Activated CD4-positive, alpha-beta T cell treated with anti-CD3 and anti-CD28 coated beads, Interleukin-2, amount 10 ng/mL, durations not matched to agents 24 days and 14 days (primary cell): ENCODE measurements at regions of chr6 and their contacts with region 1.

Region 1: DNA sequence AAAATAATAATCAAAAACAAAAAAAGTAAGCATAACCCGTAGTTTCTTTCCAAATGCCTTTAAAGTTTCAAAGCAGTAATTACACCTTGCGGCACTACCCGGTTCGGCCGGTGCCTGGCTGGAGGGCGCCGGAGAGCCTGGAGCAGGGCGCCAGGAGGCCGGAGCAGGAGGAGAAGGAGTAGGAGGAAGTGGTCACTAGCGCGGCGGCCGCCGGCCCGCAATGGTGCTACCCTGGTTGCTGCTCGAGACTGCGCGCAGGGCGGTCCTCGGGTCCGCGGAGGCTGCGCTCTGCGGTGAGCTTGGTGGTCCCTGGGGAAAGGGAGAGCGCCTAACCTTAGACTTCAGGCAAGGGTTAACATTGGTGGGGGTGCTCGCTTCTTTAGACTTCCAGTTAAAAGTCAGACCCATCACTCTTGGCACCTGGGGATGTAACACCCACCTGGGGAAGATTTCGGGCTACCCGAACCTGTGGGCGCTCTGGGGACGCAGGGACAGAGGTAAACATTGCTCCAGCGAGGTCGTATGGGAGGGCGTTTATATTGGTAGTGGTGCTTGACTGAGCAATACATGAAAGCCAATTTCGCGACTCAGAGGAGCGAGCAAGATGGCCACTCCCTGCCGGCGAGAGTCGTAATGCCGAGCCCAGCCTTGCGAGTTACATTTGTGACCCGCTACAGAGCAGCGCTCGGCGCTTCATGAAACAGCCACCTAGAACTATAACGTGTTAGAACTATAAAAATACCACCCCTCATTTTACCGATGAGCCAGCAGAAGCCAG is 5.8 kb upstream of the USP45 start:
- DNase-seq: peak; percentile 93
- H3K4me3 Mint-ChIP-seq: peak overlapping the region; percentile 99
- H3K27ac Mint-ChIP-seq: peak overlapping the region; percentile 99
- H3K4me1 Mint-ChIP-seq: peaks cover 18% of the 10 kb centered on the region
- H3K27me3 Mint-ChIP-seq: peaks cover 11% of the 10 kb centered on the region

Region 2: DNA sequence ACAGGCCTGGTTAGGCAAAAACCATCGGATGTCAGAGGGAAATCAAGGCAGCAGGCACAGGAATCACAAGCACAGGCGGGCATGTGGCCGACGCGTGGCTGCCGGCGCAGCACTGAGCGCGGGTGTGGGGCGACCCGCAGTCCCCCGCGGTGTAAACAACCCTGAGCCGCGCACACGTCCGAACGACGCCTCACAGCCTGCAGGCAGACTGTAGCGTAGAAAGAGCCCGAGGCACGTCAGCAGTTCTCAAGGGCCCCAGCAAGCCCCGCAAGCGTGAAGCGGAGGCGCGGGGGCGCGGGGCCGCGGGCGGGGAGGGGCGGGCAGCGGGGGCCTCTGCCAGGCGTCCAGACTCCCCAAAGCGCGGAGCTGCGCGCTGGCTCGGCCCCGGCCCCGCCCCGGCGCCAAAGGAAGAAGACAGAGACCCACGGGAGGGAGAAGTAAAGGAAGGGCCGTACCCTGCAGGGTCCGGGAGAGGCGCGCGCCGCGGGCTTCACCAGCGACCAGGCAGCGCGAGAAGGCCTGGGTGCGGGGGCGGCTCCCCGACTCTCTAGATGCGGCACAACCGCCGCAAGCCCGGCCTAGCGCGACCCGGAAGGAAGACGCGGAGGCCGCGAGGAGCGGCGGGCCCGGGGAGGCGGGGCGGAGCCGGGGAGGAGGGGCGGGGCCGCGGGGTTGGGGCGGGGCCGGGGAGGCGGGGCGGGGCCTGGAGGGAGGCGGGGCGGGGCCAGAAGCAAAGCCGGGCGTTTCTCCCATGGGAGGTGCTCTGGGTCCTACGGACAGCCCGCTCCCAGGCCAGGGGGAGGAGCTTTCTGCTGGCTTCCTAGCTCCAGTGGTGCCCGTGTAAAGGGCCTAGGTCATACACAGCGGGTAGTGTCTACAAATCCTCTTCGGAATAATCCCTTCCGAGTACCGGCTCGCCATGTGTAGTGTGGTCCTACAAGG is 573.4 kb before region 1 on chr6 and contains the start of gene FBXL4:
- intact Hi-C with region 1: loop called (anchors 5 kb)
- DNase-seq: peak; percentile 94
- H3K4me3 Mint-ChIP-seq: peak within 1 kb of the TSS; percentile 97
- H3K27ac Mint-ChIP-seq: peak within 1 kb of the TSS; percentile 98
- H3K4me1 Mint-ChIP-seq: peaks cover 32% of the 10 kb centered on the region
- H3K27me3 Mint-ChIP-seq: peaks cover 27% of the 10 kb centered on the region
- total RNA-seq, gene FBXL4: 12.8 and 15.3 TPM in 2 replicates

Region 3: GRCh38 chr6:99330159-99330558 is 190.9 kb before region 1 on chr6:
- intact Hi-C with region 1: no loop called
- DNase-seq: peak; percentile 87
- H3K4me3 Mint-ChIP-seq: no peak overlapping the region
- H3K27ac Mint-ChIP-seq: no peak overlapping the region
- H3K4me1 Mint-ChIP-seq: peaks cover 2% of the 10 kb centered on the region
- H3K27me3 Mint-ChIP-seq: peaks cover 10% of the 10 kb centered on the region

Region 4: DNA sequence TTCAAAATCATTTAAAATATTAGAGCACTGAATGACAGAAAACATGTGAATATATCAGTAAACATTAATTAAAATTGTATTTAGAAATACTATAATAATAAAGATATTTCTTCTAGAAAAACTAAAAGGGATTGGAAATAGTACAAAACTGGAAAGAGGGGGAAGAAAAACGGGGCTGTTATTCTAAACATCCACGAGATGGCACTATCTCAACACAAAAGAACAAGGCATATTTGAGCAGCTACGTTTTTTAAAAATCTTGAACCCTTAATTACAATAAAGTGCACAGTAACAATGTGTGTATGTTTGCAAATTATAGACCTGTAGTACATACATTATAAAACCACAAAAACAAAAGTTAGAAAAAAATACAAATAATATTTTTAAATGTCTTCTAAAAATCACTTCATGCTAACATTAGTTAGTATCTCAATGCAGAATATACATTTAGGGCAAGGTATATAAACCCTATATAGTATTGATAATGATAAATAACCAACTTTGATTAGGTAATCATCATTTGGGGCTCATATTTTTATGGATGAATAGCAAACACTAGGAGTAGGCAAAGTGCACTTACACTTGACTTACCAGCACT is 53.4 kb before region 1 on chr6:
- intact Hi-C with region 1: loop called (anchors 5 kb)
- DNase-seq: no peak
- H3K4me3 Mint-ChIP-seq: no peak overlapping the region
- H3K27ac Mint-ChIP-seq: no peak overlapping the region
- H3K4me1 Mint-ChIP-seq: no peaks in the 10 kb centered on the region
- H3K27me3 Mint-ChIP-seq: no peaks in the 10 kb centered on the region

Region 5: DNA sequence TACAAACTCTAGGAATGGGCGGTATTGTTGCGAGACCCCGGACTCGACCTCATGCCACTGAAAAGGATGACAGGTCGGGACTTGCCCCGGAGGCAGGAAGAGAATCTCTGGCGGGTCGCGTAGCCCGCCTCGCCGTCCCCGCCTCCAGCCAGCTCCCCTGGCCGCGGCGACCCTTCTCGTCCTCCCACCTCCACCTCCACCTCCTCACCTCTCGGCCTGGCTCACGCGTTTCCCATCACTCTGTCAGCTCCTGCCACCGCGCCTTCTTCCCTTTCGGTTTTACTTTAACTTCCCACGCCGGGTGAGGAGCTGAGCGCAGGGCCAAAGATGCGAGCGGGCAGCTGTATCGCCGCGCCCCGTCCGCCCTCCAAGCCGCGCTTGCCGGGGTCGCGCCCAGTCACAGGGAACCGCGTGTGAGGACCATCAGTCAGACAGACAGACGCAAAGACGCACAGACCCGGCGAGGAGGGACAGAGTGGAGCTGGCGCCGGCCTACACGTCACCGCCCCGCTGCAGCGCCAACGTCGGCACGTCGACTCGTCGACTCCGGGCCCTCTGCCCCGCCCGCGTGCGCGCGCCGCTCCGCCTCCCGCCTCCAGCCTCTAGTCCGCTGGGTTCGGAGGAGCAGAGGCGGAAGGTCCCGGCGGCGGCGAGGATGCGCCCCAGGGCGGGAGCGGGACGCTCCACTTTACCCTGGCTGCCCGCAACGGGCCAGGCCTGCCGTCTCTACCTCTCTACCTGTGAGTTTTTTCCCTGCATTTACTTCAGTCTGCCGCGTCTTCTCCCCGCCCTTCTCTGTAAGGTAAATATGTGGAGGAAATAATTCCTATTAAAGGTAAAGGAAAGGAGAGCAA is 1360.0 kb after region 1 on chr6 and contains the start of gene ASCC3:
- intact Hi-C with region 1: loop called (anchors 5 kb)
- DNase-seq: peak; percentile 98
- H3K4me3 Mint-ChIP-seq: peak within 1 kb of the TSS; percentile 100
- H3K27ac Mint-ChIP-seq: peak within 1 kb of the TSS; percentile 100
- H3K4me1 Mint-ChIP-seq: peaks cover 38% of the 10 kb centered on the region
- H3K27me3 Mint-ChIP-seq: peaks cover 2% of the 10 kb centered on the region
- total RNA-seq, gene ASCC3: 65.6 and 68.9 TPM in 2 replicates